ENCODE measurements at regions of chr1 and their contacts with region 1.

Region 1: GRCh38 chr1:192516776-192517297 is 58.7 kb upstream of the RGS1 start:
- DNase-seq: peak; percentile 71
- H3K4me3 Mint-ChIP-seq: peak overlapping the region; percentile 53
- H3K27ac Mint-ChIP-seq: peak overlapping the region; percentile 82
- H3K4me1 Mint-ChIP-seq: peaks cover 56% of the 10 kb centered on the region
- H3K27me3 Mint-ChIP-seq: no peaks in the 10 kb centered on the region

Region 2: GRCh38 chr1:192477630-192478029 is 39.2 kb before region 1 on chr1:
- CTCF ChIA-PET with region 1: interaction called, 6 read pairs
- POLR2A ChIA-PET with region 1: no interaction called
- intact Hi-C with region 1: loop called (anchors 5 kb)
- DNase-seq: no peak
- H3K4me3 Mint-ChIP-seq: no peak overlapping the region
- H3K27ac Mint-ChIP-seq: no peak overlapping the region
- H3K4me1 Mint-ChIP-seq: no peaks in the 10 kb centered on the region
- H3K27me3 Mint-ChIP-seq: no peaks in the 10 kb centered on the region

Region 3: DNA sequence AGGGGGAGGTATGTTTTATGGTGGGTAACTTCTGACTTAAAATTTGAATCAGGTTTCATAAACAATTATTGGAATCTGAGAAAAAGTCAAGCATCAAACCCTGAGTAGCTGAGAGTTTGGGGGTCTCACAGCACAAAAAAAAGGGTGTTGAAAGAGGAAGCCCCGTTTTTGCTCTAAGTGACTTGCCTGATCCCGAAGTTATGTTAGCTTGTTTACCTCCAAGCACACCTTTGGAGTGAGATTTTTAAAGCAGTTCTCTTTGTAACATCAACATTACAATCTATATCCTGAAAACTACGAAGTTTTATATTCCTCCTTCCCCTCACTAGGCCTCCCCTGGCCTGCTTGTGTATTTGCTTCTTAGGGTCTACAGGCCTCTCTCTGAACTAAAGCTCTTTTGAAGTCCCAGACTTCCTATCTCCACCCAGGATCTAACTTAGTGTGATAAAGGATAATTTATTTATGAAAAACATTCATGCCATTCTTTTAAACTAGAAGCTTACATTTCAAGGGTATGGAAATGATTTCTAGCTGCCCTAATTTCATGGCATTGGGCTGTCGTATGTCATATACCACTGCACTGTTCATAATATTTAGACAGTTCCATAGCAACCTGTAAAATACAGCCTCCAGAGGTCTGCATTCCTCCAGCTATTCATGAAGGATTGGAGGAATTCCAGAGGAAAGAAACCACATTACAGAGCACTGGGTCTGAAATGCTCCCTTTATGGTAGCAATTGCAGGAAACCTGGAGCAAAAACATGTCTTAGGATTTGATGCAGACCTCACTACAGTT is 22.7 kb after region 1 on chr1:
- CTCF ChIA-PET with region 1: interaction called, 3 read pairs
- POLR2A ChIA-PET with region 1: interaction called, 18 read pairs
- intact Hi-C with region 1: loop called (anchors 1 kb)
- DNase-seq: no peak
- H3K4me3 Mint-ChIP-seq: no peak overlapping the region
- H3K27ac Mint-ChIP-seq: peak overlapping the region; percentile 63
- H3K4me1 Mint-ChIP-seq: peaks cover 49% of the 10 kb centered on the region
- H3K27me3 Mint-ChIP-seq: no peaks in the 10 kb centered on the region

Region 4: DNA sequence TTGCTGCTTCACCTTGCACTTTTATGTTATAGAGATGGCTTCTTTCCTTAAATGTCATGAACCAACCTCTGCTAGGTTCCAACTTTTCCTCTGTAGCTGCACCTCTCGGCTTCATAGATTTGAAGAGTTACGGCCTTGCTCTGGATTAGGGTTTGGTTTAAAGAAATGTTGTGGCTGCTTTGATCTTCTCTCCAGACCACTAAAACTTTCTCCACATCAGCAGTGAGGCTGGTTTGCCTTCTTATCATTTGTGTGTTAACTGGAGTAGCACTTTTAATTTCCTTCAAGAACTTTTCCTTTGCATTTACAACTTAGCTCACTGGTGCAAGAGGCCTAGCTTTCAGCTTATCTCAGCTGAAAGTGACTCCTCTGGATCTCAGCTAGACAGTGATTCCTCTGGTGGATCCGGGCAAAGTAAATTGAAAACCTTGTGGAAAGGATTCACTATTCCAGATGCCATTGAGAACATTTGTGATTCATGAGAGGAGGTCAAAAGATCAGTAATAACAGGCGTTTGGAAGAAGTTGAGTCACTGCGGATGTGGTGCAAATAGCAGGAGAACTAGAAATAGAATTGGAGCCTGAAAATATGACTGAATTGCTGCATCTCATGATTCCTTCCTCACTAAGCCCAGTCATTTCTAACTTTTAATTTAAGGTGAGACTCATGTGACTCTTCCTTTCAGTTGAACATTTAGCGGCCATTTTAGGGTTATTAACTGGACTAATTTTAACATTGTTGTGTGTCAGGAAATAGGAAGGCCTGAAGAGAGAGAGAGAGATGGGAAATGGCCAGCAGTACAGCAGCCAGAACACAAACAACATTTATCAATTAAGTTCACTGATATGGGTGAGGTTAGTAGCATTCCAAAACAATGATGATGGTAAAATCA is 42.5 kb after region 1 on chr1:
- CTCF ChIA-PET with region 1: no interaction called
- POLR2A ChIA-PET with region 1: no interaction called
- intact Hi-C with region 1: no loop called
- DNase-seq: peak; percentile 36
- H3K4me3 Mint-ChIP-seq: no peak overlapping the region
- H3K27ac Mint-ChIP-seq: peak overlapping the region; percentile 33
- H3K4me1 Mint-ChIP-seq: peaks cover 44% of the 10 kb centered on the region
- H3K27me3 Mint-ChIP-seq: no peaks in the 10 kb centered on the region

Region 5: DNA sequence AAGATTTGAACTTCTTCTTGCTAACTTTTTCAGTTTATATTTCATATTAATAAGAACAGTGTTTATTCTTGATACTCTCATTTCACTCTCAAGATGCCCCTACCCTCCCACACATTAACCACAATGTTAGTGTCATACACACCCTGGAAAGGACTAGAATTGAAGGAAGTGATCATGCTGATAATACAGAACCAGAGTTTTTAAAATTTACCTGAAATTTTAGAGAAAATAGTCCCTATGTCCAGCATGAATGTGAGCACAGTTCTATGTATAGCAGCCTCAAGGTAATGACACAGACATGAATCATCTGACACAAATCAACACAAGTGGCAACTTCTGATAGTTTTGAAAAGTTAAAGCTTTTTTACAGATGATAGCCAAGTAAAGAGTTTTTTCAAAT is 84.7 kb after region 1 on chr1:
- CTCF ChIA-PET with region 1: no interaction called
- POLR2A ChIA-PET with region 1: no interaction called
- intact Hi-C with region 1: loop called (anchors 2 kb)
- DNase-seq: no peak
- H3K4me3 Mint-ChIP-seq: no peak overlapping the region
- H3K27ac Mint-ChIP-seq: no peak overlapping the region
- H3K4me1 Mint-ChIP-seq: peaks cover 26% of the 10 kb centered on the region
- H3K27me3 Mint-ChIP-seq: no peaks in the 10 kb centered on the region

Region 6: GRCh38 chr1:192654591-192655251 is 137.9 kb after region 1 on chr1:
- CTCF ChIA-PET with region 1: no interaction called
- POLR2A ChIA-PET with region 1: no interaction called
- intact Hi-C with region 1: loop called (anchors 1 kb)
- DNase-seq: peak; percentile 33
- H3K4me3 Mint-ChIP-seq: no peak overlapping the region
- H3K27ac Mint-ChIP-seq: peak overlapping the region; percentile 43
- H3K4me1 Mint-ChIP-seq: peaks cover 13% of the 10 kb centered on the region
- H3K27me3 Mint-ChIP-seq: peaks cover 14% of the 10 kb centered on the region

Region 7: DNA sequence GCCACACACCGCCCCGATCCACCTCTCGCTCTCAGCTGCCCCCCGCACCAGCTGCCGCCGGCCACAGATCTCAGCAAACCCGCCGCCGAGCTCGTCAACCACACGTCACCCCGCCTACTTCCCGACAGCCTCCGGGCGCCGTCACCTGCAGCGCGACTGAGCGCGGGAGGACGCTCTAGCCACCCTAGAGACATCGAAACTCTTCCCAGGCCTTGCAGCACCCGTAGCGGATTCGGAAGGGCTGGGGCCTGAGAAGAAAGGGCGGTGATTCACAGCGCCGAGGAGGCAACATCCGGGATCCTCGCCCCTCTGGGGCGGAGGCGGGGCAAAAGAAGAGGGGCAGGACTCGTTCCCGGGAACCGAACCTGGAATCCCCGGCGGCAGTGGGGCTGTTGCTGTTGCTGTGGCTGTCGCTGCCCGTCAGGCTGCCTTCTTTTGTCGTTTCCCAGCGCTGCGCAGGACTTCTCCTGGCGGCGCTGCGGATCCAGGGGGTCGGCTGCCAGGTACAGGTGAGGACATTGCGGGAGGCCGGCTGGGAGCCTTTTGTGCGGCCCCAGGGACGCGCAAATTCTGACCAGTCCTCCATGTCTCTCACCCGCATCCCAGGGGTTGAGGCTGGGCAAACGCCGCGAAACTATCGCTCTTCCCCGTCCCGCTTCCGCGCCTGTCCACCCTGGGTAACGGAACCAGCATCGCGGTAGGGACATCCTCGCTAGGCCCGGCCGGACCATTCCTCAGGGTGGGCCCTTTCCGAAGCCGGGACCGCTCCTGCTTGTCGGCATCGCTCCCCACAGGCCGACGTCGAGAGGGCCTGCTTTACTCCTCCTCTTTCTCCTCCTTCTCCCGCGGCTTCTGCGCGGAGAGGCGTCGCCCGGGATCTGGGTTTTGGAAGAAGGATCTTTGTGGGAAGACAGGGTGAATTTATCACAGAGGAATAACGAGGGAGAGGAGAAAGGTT is 542.7 kb after region 1 on chr1 and contains the starts of genes RO60 and UCHL5:
- CTCF ChIA-PET with region 1: no interaction called
- POLR2A ChIA-PET with region 1: interaction called, 5 read pairs
- intact Hi-C with region 1: loop called (anchors 2 kb)
- DNase-seq: peak; percentile 98
- H3K4me3 Mint-ChIP-seq: peak within 1 kb of the TSS; percentile 92
- H3K27ac Mint-ChIP-seq: peak within 1 kb of the TSS; percentile 98
- H3K4me1 Mint-ChIP-seq: peaks cover 57% of the 10 kb centered on the region
- H3K27me3 Mint-ChIP-seq: peaks cover 1% of the 10 kb centered on the region
- total RNA-seq, gene RO60: 56.5 to 65.8 TPM
- total RNA-seq, gene UCHL5: 72.1 to 77.5 TPM